Mucosa of descending colon (tissue), 3 donors: ENCODE measurements at regions of chr9 and their contacts with region 1.

Region 1: GRCh38 chr9:114291064-114291474 is 31.8 kb upstream of the ORM1 start:
- DNase-seq: peak in 2 of 3 donors; percentile 82 to 84
- ATAC-seq: peak; percentile 75
- H3K4me3 ChIP-seq: no peak overlapping the region
- H3K4me1 ChIP-seq: no peaks in the 10 kb centered on the region
- CTCF ChIP-seq: peak; percentile 87

Region 2: DNA sequence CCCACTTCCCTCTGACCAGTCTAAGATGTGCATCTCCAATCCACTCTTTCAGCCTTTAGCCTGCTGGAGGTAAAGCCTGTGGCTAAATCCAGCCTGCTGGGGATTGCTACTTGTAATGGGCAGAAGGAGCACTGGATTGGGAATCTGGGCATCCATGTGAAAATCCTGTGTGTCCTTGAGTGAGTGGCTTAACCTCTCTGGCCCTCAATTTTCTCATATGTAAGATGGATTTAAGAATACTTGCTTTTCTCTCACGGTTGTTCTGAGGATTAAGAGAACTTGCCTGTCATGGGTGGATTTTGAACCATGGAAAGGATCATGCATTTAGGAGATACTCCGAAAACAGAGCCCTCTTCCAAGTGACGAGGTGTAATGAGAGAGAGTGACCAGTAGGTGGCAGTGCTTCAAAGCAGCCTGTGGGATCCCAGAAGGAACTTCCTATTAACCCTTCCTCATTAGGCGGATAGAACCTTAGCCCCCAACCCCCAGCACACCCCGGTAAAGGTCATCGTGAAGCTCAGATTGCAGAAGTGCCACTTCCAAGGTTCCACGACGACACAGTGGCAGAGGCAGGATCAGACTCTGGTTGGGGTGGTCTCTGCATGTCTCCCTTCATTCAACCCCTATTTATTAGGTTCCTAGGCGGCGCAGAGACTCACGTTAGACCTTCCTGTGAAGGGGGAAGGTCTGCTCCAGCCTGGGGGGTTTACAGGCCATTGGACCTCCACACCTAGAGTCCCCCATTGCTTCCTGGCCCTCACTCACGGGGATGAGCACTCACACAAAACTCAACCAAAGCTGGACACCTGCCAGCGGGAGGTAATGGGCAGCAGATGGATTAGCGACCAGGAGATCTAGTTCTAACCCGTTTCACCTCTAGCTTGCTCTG is 483.7 kb before region 1 on chr9:
- intact Hi-C with region 1: loop called in 1 of 2 experiments (anchors 10 kb)
- DNase-seq: peak in 2 of 3 donors; percentile 42 to 59
- ATAC-seq: peak; percentile 88
- H3K4me3 ChIP-seq: no peak overlapping the region
- H3K4me1 ChIP-seq: peaks cover 2% of the 10 kb centered on the region
- CTCF ChIP-seq: peak; percentile 75

Region 3: DNA sequence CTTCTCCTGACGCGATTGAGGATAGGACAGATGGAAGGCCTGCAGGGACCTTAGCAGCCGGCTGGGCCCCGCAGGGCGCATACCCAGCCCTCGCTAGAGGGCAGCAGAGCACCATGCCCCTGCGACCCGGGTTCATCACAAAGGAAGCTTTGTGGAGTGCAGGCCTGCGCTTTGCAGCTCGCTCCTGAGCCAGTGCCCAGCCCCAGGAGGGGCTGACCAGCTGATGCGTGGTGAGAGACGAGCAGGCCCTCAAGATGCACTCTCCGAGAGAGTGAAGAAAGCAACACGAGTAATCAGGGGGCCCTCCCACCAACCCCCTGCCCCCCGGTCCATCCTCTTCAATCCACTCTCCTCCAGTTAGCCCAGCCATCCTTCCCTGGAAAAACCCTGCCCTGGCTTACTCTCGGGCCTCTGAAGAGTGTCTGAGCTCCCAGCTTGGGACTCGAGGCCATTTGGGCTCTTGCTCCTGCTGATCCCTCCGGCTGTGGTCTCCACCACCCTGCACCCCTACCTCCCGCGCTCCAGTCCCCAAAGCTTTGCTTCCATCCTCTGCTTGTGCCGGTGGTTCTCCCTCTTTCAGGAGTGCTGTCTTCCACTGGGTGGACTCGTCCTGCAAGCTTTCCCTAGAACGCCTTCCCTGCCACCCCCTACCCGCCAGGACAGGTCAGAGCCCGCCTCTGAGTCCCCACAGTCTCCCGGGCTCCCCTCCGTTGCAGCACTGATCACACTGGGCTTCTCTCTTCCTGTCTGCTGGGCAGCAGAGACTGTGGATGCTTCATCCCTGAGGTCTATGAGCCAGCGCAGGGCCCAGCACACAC is 182.8 kb before region 1 on chr9:
- intact Hi-C with region 1: loop called (anchors 5 to 10 kb)
- DNase-seq: peak; percentile 70 to 87 (median 85)
- ATAC-seq: peak; percentile 99
- H3K4me3 ChIP-seq: no peak overlapping the region
- H3K4me1 ChIP-seq: peaks cover 2% of the 10 kb centered on the region
- CTCF ChIP-seq: peak; percentile 90

Region 4: GRCh38 chr9:114155263-114155972 is 135.7 kb before region 1 on chr9 and contains the start of gene COL27A1:
- intact Hi-C with region 1: loop called (anchors 5 kb)
- DNase-seq: peak; percentile 70 to 87 (median 86)
- ATAC-seq: peak; percentile 90
- H3K4me3 ChIP-seq: no peak within 1 kb of the TSS
- H3K4me1 ChIP-seq: peaks cover 14% of the 10 kb centered on the region
- CTCF ChIP-seq: peak; percentile 86
- total RNA-seq, gene COL27A1: 3.1 to 13.6 (median 4.0) TPM